Activated T-helper 2 cell treated with anti-CD3 and anti-CD28 coated beads, Interferon-gamma antibody, Interleukin-2, Interleukin-4, amounts not matched to agents 10 μg/mL and 5 μg/mL and 100 μg/mL, durations not matched to agents 14 hours and 24 hours and 36 hours (primary cell): ENCODE measurements at regions of chr5 and their contacts with region 1.

Region 1: GRCh38 chr5:68460147-68460798 is 244.7 kb downstream of the PIK3R1 start:
- DNase-seq: no peak
- H3K4me3 Mint-ChIP-seq: no peak overlapping the region
- H3K27ac Mint-ChIP-seq: no peak overlapping the region
- H3K4me1 Mint-ChIP-seq: peaks cover 23% of the 10 kb centered on the region
- H3K27me3 Mint-ChIP-seq: peaks cover 2% of the 10 kb centered on the region

Region 2: GRCh38 chr5:68070591-68071281 is 389.5 kb before region 1 on chr5:
- intact Hi-C with region 1: no loop called
- DNase-seq: no peak
- H3K4me3 Mint-ChIP-seq: no peak overlapping the region
- H3K27ac Mint-ChIP-seq: no peak overlapping the region
- H3K4me1 Mint-ChIP-seq: no peaks in the 10 kb centered on the region
- H3K27me3 Mint-ChIP-seq: no peaks in the 10 kb centered on the region

Region 3: GRCh38 chr5:68287976-68288706 is 172.1 kb before region 1 on chr5:
- intact Hi-C with region 1: loop called (anchors 1 kb)
- DNase-seq: peak; percentile 42
- H3K4me3 Mint-ChIP-seq: peak overlapping the region; percentile 86
- H3K27ac Mint-ChIP-seq: peak overlapping the region; percentile 82
- H3K4me1 Mint-ChIP-seq: peaks cover 86% of the 10 kb centered on the region
- H3K27me3 Mint-ChIP-seq: no peaks in the 10 kb centered on the region

Region 4: DNA sequence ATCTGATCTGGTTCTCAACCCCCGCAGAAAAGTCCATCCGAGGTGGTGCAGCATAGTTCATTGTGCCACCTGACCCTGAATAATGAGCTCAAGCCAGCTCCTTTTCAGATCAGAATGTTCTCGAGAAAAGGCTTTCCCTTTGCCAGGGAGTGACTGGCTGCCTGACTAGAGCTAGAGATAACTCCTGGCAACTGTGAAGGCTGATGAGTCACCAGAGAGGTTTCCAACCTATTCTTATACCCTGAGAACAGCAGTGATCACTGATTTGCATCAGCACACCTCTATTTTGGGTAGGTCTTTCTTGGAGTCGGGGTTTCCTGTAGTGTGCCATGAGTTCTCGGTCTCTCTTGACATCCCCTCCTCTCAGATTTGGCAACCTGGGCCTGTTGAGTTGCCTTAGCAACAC is 116.8 kb before region 1 on chr5:
- intact Hi-C with region 1: loop called (anchors 2 kb)
- DNase-seq: peak; percentile 20
- H3K4me3 Mint-ChIP-seq: no peak overlapping the region
- H3K27ac Mint-ChIP-seq: no peak overlapping the region
- H3K4me1 Mint-ChIP-seq: peaks cover 52% of the 10 kb centered on the region
- H3K27me3 Mint-ChIP-seq: peaks cover 7% of the 10 kb centered on the region

Region 5: DNA sequence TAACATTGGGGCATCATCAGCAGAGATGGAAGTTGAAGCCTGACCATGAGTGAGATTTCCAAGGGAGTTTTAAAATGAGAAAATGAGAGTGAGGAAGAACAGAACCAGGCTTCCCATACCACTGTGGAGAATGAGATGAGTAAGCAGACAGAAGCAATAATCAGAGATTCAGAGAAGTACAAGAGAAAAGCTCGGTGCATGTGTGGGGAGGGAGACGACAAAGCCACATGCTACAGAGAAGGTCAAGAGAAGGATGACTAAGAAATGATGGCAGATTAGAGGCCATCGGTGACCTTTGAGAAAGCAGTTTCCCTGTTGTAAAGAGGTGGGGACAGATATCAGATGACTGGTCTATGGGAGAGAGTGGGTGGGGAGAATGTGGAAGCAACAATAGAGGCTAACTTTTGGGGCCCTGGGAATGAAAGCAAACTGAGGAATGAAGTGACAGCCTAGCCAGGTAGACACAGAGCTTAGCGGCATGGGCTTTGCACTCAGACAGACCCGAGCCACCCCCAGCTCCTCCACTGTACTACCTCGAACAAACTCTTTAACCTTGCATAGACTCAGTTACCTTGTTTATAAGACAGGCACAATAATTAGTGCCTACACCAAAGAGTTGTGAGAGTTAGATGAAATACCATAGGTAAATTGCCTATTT is 37.0 kb before region 1 on chr5:
- intact Hi-C with region 1: loop called (anchors 1 kb)
- DNase-seq: no peak
- H3K4me3 Mint-ChIP-seq: peak overlapping the region; percentile 30
- H3K27ac Mint-ChIP-seq: peak overlapping the region; percentile 59
- H3K4me1 Mint-ChIP-seq: peaks cover 50% of the 10 kb centered on the region
- H3K27me3 Mint-ChIP-seq: peaks cover 16% of the 10 kb centered on the region

Region 6: GRCh38 chr5:69007726-69008368 is 547.6 kb after region 1 on chr5:
- intact Hi-C with region 1: loop called (anchors 5 kb)
- DNase-seq: peak; percentile 51
- H3K4me3 Mint-ChIP-seq: no peak overlapping the region
- H3K27ac Mint-ChIP-seq: no peak overlapping the region
- H3K4me1 Mint-ChIP-seq: no peaks in the 10 kb centered on the region
- H3K27me3 Mint-ChIP-seq: peaks cover 37% of the 10 kb centered on the region

Region 7: DNA sequence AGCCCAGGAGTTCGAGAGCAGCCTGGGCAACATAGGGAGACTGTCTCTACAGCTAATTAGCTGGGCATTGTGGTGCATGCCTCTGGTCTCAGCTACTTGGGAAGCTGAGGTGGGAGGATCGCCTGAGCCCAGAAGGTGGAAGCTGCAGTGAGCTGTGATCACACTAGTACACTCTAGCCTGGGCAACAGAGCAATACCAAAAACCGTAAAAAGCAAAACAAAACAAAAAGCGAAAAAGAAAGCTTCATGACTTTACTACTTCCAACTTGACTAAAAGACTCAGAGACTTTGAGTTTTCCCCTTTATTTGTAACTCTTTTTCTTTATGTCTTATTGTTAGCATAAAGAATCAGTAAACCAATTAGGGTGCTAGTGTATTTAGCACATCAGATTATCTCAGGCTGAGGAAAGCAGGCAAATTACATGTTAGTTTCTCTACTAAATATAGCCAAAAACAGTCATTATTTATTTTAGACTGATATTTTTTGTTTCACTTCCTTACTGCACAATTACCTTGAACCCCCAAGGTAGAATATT is 914.7 kb after region 1 on chr5:
- intact Hi-C with region 1: no loop called
- DNase-seq: no peak
- H3K4me3 Mint-ChIP-seq: no peak overlapping the region
- H3K27ac Mint-ChIP-seq: no peak overlapping the region
- H3K4me1 Mint-ChIP-seq: peaks cover 8% of the 10 kb centered on the region
- H3K27me3 Mint-ChIP-seq: no peaks in the 10 kb centered on the region